Activated T-helper 1 cell treated with anti-CD3 and anti-CD28 coated beads, Interleukin-12 subunit alpha, Interleukin-12 subunit beta, Interleukin-2, Interleukin-4 antibody, amounts not matched to agents 30 ng/mL and 10 ng/mL and 1 ng/mL, durations not matched to agents 14 hours and 24 hours and 36 hours (primary cell): ENCODE measurements at regions of chr10 and their contacts with region 1.

Region 1: GRCh38 chr10:102503281-102504220 is at the start of gene SUFU:
- DNase-seq: peak; percentile 97
- H3K4me3 Mint-ChIP-seq: no peak within 1 kb of the TSS
- H3K27ac Mint-ChIP-seq: peak within 1 kb of the TSS; percentile 84
- H3K4me1 Mint-ChIP-seq: peaks cover 25% of the 10 kb centered on the region
- H3K27me3 Mint-ChIP-seq: no peaks in the 10 kb centered on the region
- total RNA-seq, gene SUFU: 9.3 and 11.6 TPM in 2 replicates

Region 2: GRCh38 chr10:101840741-101841453 is 662.7 kb before region 1 on chr10:
- intact Hi-C with region 1: loop called (anchors 5 kb)
- DNase-seq: peak; percentile 71
- H3K4me3 Mint-ChIP-seq: peak overlapping the region; percentile 85
- H3K27ac Mint-ChIP-seq: peak overlapping the region; percentile 77
- H3K4me1 Mint-ChIP-seq: peaks cover 55% of the 10 kb centered on the region
- H3K27me3 Mint-ChIP-seq: peaks cover 18% of the 10 kb centered on the region

Region 3: DNA sequence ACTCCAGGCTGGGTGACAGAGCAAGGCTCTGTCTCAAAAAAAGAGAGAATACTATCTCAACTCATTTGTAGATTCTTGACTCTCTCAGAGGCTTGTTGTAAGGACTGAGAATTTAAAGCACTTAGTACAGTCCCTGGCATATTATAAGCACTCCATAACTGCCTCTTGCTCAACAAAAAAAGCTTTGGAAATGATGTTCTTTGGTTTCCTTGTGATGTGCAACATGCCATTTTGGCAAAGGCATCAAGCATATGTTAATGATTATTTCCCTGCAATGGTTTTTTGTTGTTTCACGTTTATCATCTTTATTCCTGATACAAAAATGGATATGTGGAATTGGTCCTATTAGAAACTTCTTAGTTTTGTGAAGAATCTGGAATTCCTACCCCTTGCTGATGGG is 335.7 kb before region 1 on chr10:
- intact Hi-C with region 1: loop called (anchors 5 kb)
- DNase-seq: no peak
- H3K4me3 Mint-ChIP-seq: no peak overlapping the region
- H3K27ac Mint-ChIP-seq: no peak overlapping the region
- H3K4me1 Mint-ChIP-seq: peaks cover 10% of the 10 kb centered on the region
- H3K27me3 Mint-ChIP-seq: no peaks in the 10 kb centered on the region

Region 4: GRCh38 chr10:102300278-102300843 is 203.2 kb before region 1 on chr10:
- intact Hi-C with region 1: no loop called
- DNase-seq: no peak
- H3K4me3 Mint-ChIP-seq: no peak overlapping the region
- H3K27ac Mint-ChIP-seq: peak overlapping the region; percentile 86
- H3K4me1 Mint-ChIP-seq: peaks cover 11% of the 10 kb centered on the region
- H3K27me3 Mint-ChIP-seq: no peaks in the 10 kb centered on the region

Region 5: GRCh38 chr10:102420810-102421644 is 82.5 kb before region 1 on chr10 and contains the start of gene FBXL15:
- intact Hi-C with region 1: loop called (anchors 1 kb)
- DNase-seq: peak; percentile 96
- H3K4me3 Mint-ChIP-seq: peak within 1 kb of the TSS; percentile 99
- H3K27ac Mint-ChIP-seq: peak within 1 kb of the TSS; percentile 98
- H3K4me1 Mint-ChIP-seq: peaks cover 34% of the 10 kb centered on the region
- H3K27me3 Mint-ChIP-seq: peaks cover 9% of the 10 kb centered on the region
- total RNA-seq, gene FBXL15: 14.5 and 18.5 TPM in 2 replicates

Region 6: GRCh38 chr10:102485093-102485784 is 18.3 kb before region 1 on chr10:
- intact Hi-C with region 1: no loop called
- DNase-seq: no peak
- H3K4me3 Mint-ChIP-seq: no peak overlapping the region
- H3K27ac Mint-ChIP-seq: no peak overlapping the region
- H3K4me1 Mint-ChIP-seq: no peaks in the 10 kb centered on the region
- H3K27me3 Mint-ChIP-seq: no peaks in the 10 kb centered on the region

Region 7: DNA sequence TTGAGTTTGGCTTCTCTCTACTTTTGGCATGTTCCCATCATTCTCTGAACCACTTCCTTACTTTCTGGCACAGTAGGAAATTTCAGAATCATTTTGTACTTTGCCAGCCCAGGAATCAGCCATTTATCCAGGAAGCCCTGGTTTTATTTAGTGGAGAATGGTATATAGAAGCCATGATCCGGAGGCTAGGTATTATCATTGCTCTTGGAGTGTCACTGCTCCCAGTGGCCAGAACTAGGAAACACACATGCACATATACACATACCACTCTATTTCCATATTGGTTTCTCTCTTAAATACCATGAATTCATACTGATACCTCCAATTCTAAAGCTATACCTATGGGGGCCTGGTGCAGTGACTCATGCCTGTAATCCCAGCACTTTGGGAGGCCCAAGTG is 36.5 kb after region 1 on chr10:
- intact Hi-C with region 1: loop called (anchors 1 kb)
- DNase-seq: no peak
- H3K4me3 Mint-ChIP-seq: no peak overlapping the region
- H3K27ac Mint-ChIP-seq: no peak overlapping the region
- H3K4me1 Mint-ChIP-seq: peaks cover 7% of the 10 kb centered on the region
- H3K27me3 Mint-ChIP-seq: no peaks in the 10 kb centered on the region

Region 8: DNA sequence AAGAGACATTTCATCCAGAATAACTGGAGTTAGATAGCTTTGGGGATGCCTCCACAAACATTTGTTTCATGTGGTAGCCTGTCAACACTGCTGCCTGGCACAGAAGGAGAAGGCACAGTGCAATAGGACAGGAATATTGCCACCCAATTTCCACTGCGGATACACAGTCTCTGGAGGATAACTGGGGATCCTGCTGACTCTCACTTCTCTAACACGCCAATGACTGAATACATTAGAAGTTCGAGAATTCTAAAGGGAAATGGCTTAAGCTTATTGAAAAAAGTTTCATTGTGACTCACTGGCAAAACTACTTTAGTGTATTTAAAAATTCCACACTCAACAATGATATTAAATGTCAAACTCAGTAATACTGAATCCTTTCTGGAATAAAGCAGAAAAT is 197.7 kb after region 1 on chr10:
- intact Hi-C with region 1: no loop called
- DNase-seq: no peak
- H3K4me3 Mint-ChIP-seq: no peak overlapping the region
- H3K27ac Mint-ChIP-seq: no peak overlapping the region
- H3K4me1 Mint-ChIP-seq: peaks cover 16% of the 10 kb centered on the region
- H3K27me3 Mint-ChIP-seq: no peaks in the 10 kb centered on the region

Region 9: GRCh38 chr10:102713814-102714620 is 210.5 kb after region 1 on chr10 and contains the start of gene ARL3:
- intact Hi-C with region 1: loop called (anchors 1 kb)
- DNase-seq: peak; percentile 95
- H3K4me3 Mint-ChIP-seq: peak within 1 kb of the TSS; percentile 88
- H3K27ac Mint-ChIP-seq: peak within 1 kb of the TSS; percentile 91
- H3K4me1 Mint-ChIP-seq: peaks cover 52% of the 10 kb centered on the region
- H3K27me3 Mint-ChIP-seq: no peaks in the 10 kb centered on the region
- total RNA-seq, gene ARL3: 6.6 and 6.8 TPM in 2 replicates

Region 10: DNA sequence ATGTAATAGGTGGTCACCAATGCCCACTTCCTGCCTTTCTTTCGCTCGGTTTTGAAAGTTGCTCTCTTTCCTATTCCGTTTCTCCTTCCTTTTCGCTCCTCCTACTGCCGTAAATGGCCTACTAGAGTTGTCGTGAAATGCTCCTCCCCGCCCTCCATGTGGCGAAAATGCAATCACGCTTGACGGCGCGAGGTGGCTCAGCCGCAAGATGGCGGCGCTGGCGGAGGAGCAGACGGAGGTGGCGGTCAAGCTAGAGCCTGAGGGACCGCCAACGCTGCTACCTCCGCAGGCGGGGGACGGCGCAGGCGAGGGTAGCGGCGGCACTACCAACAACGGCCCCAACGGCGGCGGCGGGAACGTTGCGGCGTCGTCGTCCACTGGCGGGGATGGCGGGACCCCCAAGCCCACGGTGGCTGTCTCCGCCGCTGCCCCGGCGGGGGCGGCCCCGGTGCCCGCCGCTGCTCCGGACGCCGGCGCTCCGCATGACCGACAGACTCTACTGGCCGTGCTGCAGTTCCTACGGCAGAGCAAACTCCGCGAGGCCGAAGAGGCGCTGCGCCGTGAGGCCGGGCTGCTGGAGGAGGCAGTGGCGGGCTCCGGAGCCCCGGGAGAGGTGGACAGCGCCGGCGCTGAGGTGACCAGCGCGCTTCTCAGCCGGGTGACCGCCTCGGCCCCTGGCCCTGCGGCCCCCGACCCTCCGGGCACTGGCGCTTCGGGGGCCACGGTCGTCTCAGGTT is 864.4 kb after region 1 on chr10 and contains the start of gene TAF5:
- intact Hi-C with region 1: loop called (anchors 1 kb)
- DNase-seq: peak; percentile 89
- H3K4me3 Mint-ChIP-seq: peak within 1 kb of the TSS; percentile 89
- H3K27ac Mint-ChIP-seq: peak within 1 kb of the TSS; percentile 91
- H3K4me1 Mint-ChIP-seq: peaks cover 5% of the 10 kb centered on the region
- H3K27me3 Mint-ChIP-seq: no peaks in the 10 kb centered on the region
- total RNA-seq, gene TAF5: 10.4 and 11.0 TPM in 2 replicates